Gastrocnemius medialis (tissue), 4 donors: ENCODE measurements at regions of chr17 and their contacts with region 1.

Region 1: GRCh38 chr17:39754161-39754951 is 16.6 kb downstream of the GRB7 start:
- DNase-seq: peak; percentile 67 to 85
- ATAC-seq: peak; percentile 92 to 95
- H3K4me3 ChIP-seq: peak overlapping the region; percentile 62 to 85 (median 76)
- H3K27ac ChIP-seq: peak overlapping the region; percentile 76 to 86 (median 83)
- H3K4me1 ChIP-seq: peaks cover 0 to 5% of the 10 kb centered on the region in 2 donors
- H3K27me3 ChIP-seq: no peaks in the 10 kb centered on the region
- CTCF ChIP-seq: peak; percentile 85 to 100 (median 98)
- POLR2A ChIP-seq: peak; percentile 51 to 67

Region 2: GRCh38 chr17:39553341-39553945 is 200.9 kb before region 1 on chr17:
- in situ Hi-C with region 1: loop called in 1 of 4 experiments (anchors 10 kb)
- intact Hi-C with region 1: loop called (anchors 10 kb)
- DNase-seq: no peak
- ATAC-seq: no peak
- H3K4me3 ChIP-seq: no peak overlapping the region
- H3K27ac ChIP-seq: no peak overlapping the region
- H3K4me1 ChIP-seq: peaks cover 0 to 5% of the 10 kb centered on the region in 2 donors
- H3K27me3 ChIP-seq: no peaks in the 10 kb centered on the region
- CTCF ChIP-seq: no peak
- POLR2A ChIP-seq: no peak

Region 3: DNA sequence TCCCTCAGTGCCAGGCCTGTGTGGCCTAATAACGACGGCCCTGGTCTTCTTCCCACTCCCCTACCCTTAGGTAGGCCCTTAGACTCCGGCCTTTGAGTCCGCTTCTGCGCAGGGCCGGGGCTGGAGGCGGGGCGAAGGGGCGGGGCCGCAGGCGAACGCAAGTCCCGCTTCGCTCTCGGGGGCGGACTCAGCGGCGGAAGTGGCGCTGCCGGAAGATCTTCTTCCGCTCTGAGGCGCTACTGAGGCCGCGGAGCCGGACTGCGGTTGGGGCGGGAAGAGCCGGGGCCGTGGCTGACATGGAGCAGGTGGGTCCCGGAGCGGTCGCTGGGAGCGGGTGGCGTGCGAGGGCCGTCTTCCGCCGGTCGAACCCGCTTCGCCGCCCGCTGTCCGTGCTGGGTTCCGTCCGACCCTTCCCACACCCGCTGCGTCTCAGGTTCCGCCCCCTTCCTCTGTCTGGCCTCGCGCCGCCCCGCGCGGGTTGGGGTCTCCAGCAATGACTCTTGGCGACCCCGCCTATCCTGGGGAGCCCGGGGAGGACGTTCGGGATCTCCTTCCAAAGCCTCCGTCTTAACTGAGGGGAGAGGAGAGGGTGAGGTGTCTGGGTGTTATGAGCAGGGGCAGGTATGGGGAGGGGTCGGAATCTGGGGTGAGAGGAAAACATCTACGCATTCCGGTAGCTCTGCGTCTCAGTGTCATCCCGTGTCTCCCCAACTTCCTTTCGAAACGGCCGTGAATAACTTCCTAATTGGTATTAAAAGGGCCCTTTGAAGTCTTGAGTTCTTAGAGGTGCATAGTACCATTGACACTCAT is 117.2 kb before region 1 on chr17 and contains the start of gene STARD3:
- in situ Hi-C with region 1: no loop called
- intact Hi-C with region 1: loop called (anchors 5 kb)
- DNase-seq: peak; percentile 84 to 89
- ATAC-seq: peak; percentile 92 to 93
- H3K4me3 ChIP-seq: peak within 1 kb of the TSS; percentile 76 to 97 (median 92)
- H3K27ac ChIP-seq: peak within 1 kb of the TSS; percentile 93 to 99 (median 94)
- H3K4me1 ChIP-seq: peaks cover 41 to 48% of the 10 kb centered on the region in 2 donors
- H3K27me3 ChIP-seq: no peaks in the 10 kb centered on the region
- CTCF ChIP-seq: peak in 3 of 5 experiments; percentile 16 to 44 (median 26)
- POLR2A ChIP-seq: peak; percentile 46 to 56
- total RNA-seq, gene STARD3: 31.0 to 41.7 (median 41.0) TPM

Region 4: GRCh38 chr17:39730095-39730921 is 24.0 kb before region 1 on chr17 and contains the start of gene MIEN1:
- in situ Hi-C with region 1: no loop called
- intact Hi-C with region 1: loop called (anchors 1 kb)
- DNase-seq: peak; percentile 80 to 86
- ATAC-seq: peak; percentile 96
- H3K4me3 ChIP-seq: peak within 1 kb of the TSS; percentile 78 to 92 (median 89)
- H3K27ac ChIP-seq: peak within 1 kb of the TSS; percentile 84 to 89 (median 87)
- H3K4me1 ChIP-seq: peaks cover 7 to 9% of the 10 kb centered on the region in 2 donors
- H3K27me3 ChIP-seq: no peaks in the 10 kb centered on the region
- CTCF ChIP-seq: peak; percentile 83 to 95 (median 92)
- POLR2A ChIP-seq: peak; percentile 65 to 87
- total RNA-seq, gene MIEN1: 42.8 to 81.9 (median 67.7) TPM